ENCODE measurements at regions of chr4 and their contacts with region 1.

Region 1: GRCh38 chr4:137819964-137820383 is 287.7 kb upstream of the PCDH18 start:
- DNase-seq: peak; percentile 46 to 58
- H3K4me3 ChIP-seq: no peak overlapping the region
- H3K4me3 Mint-ChIP-seq: no peak overlapping the region
- H3K27ac Mint-ChIP-seq: no peak overlapping the region
- H3K4me1 ChIP-seq: no peaks in the 10 kb centered on the region
- H3K4me1 Mint-ChIP-seq: no peaks in the 10 kb centered on the region
- H3K27me3 ChIP-seq: no peaks in the 10 kb centered on the region
- H3K27me3 Mint-ChIP-seq: no peaks in the 10 kb centered on the region
- CTCF ChIP-seq: peak; percentile 64 to 76

Region 2: GRCh38 chr4:137861682-137862081 is 41.7 kb after region 1 on chr4:
- CTCF ChIA-PET with region 1: interaction called, 11 read pairs
- POLR2A ChIA-PET with region 1: no interaction called
- intact Hi-C with region 1: loop called (anchors 1 kb)
- DNase-seq: peak in 1 of 2 experiments; percentile 7
- H3K4me3 ChIP-seq: no peak overlapping the region
- H3K4me3 Mint-ChIP-seq: no peak overlapping the region
- H3K27ac Mint-ChIP-seq: no peak overlapping the region
- H3K4me1 ChIP-seq: no peaks in the 10 kb centered on the region
- H3K4me1 Mint-ChIP-seq: peaks cover 7% of the 10 kb centered on the region
- H3K27me3 ChIP-seq: no peaks in the 10 kb centered on the region
- H3K27me3 Mint-ChIP-seq: no peaks in the 10 kb centered on the region
- CTCF ChIP-seq: peak; percentile 14 to 15

Region 3: GRCh38 chr4:137981282-137981681 is 161.3 kb after region 1 on chr4:
- CTCF ChIA-PET with region 1: no interaction called
- POLR2A ChIA-PET with region 1: no interaction called
- intact Hi-C with region 1: loop called (anchors 1 kb)
- DNase-seq: no peak
- H3K4me3 ChIP-seq: no peak overlapping the region
- H3K4me3 Mint-ChIP-seq: no peak overlapping the region
- H3K27ac Mint-ChIP-seq: no peak overlapping the region
- H3K4me1 ChIP-seq: no peaks in the 10 kb centered on the region
- H3K4me1 Mint-ChIP-seq: no peaks in the 10 kb centered on the region
- H3K27me3 ChIP-seq: no peaks in the 10 kb centered on the region
- H3K27me3 Mint-ChIP-seq: peaks cover 4% of the 10 kb centered on the region
- CTCF ChIP-seq: no peak

Region 4: GRCh38 chr4:138035781-138036258 is 215.8 kb after region 1 on chr4:
- CTCF ChIA-PET with region 1: no interaction called
- POLR2A ChIA-PET with region 1: no interaction called
- intact Hi-C with region 1: loop called (anchors 5 kb)
- DNase-seq: peak in 1 of 2 experiments; percentile 56
- H3K4me3 ChIP-seq: no peak overlapping the region
- H3K4me3 Mint-ChIP-seq: no peak overlapping the region
- H3K27ac Mint-ChIP-seq: no peak overlapping the region
- H3K4me1 ChIP-seq: no peaks in the 10 kb centered on the region
- H3K4me1 Mint-ChIP-seq: peaks cover under 1% of the 10 kb centered on the region
- H3K27me3 ChIP-seq: no peaks in the 10 kb centered on the region
- H3K27me3 Mint-ChIP-seq: no peaks in the 10 kb centered on the region
- CTCF ChIP-seq: peak; percentile 58 to 67

Region 5: DNA sequence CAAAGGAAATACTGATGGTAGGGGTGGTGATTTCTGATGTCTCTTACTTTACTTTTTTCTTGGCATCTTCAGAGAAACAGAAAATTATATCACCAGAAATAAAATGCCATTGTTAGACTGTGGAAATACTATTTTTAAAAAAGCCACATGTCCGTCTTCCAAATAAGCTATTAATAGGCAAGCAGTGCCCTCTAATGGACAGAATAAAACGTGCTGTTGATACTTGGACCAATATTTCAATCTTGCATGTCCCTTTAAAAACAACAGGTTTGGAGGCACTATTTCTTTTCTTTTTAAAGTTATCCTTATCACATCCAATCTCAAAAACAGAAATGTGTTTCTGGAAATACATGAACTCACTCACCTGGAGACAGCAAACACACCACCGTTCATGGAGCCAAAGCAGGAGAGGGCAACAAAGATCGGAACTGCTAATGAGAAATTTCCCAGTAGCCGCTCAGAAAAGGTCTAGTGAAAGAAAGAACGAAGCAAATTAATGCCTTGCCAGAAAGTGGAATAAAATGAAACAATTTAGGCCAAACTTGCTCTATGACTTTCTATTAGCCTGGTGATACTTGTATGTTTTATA is 363.0 kb after region 1 on chr4:
- CTCF ChIA-PET with region 1: interaction called, 4 read pairs
- POLR2A ChIA-PET with region 1: no interaction called
- intact Hi-C with region 1: loop called (anchors 1 kb)
- DNase-seq: peak in 1 of 2 experiments; percentile 45
- H3K4me3 ChIP-seq: no peak overlapping the region
- H3K4me3 Mint-ChIP-seq: no peak overlapping the region
- H3K27ac Mint-ChIP-seq: no peak overlapping the region
- H3K4me1 ChIP-seq: no peaks in the 10 kb centered on the region
- H3K4me1 Mint-ChIP-seq: no peaks in the 10 kb centered on the region
- H3K27me3 ChIP-seq: no peaks in the 10 kb centered on the region
- H3K27me3 Mint-ChIP-seq: no peaks in the 10 kb centered on the region
- CTCF ChIP-seq: peak; percentile 50 to 60

Region 6: GRCh38 chr4:138576684-138577083 is 756.7 kb after region 1 on chr4:
- CTCF ChIA-PET with region 1: interaction called, 3 read pairs
- POLR2A ChIA-PET with region 1: no interaction called
- intact Hi-C with region 1: loop called (anchors 1 kb)
- DNase-seq: peak in 1 of 2 experiments; percentile 33
- H3K4me3 ChIP-seq: no peak overlapping the region
- H3K4me3 Mint-ChIP-seq: no peak overlapping the region
- H3K27ac Mint-ChIP-seq: no peak overlapping the region
- H3K4me1 ChIP-seq: no peaks in the 10 kb centered on the region
- H3K4me1 Mint-ChIP-seq: no peaks in the 10 kb centered on the region
- H3K27me3 ChIP-seq: no peaks in the 10 kb centered on the region
- H3K27me3 Mint-ChIP-seq: no peaks in the 10 kb centered on the region
- CTCF ChIP-seq: peak; percentile 47 to 63